Pancreas (tissue), 10 donors: ENCODE measurements at regions of chr6 and their contacts with region 1.

Region 1: DNA sequence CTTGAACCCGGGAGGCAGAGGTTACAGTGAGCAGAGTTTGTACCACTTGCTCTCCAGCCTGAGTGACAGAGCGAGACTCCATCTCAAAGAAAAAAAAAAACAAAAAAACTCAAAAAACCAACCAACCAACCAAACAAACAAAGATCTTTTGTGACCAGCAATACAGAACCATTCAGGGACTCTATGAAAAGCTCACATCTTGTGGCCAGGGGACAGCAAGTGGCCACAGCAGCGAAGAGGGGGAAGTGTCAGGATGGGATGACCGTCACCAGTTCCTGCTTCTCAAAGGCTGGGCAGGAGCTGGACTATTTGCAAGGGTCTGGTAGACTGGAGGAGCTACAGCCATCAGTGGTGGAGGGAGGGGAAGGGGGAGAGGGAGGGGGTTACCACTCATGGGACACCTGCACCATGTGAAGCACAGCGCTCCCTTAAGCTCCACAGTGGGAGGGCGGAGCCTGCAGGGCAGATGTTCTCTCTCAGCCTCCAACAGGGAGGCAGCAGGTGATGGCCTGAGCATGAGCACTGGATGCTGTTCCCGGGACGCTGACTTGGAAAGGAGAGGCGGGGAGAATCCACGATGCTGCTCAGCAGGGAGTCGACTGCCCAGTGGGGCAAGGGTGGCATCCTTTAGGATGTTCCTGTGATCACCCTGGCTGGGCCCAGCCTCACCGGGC is 19.7 kb upstream of the ULBP3 start:
- DNase-seq: no peak
- ATAC-seq: no peak
- H3K4me3 ChIP-seq: no peak overlapping the region
- H3K27ac ChIP-seq: no peak overlapping the region
- H3K4me1 ChIP-seq: no peaks in the 10 kb centered on the region
- H3K27me3 ChIP-seq: no peaks in the 10 kb centered on the region
- CTCF ChIP-seq: no peak

Region 2: GRCh38 chr6:150334790-150335783 is 246.5 kb after region 1 on chr6:
- intact Hi-C with region 1: loop called in 2 of 3 experiments (anchors 5 kb)
- DNase-seq: peak in 3 of 6 donors; percentile 21 to 59 (median 24)
- ATAC-seq: peak; percentile 50 to 82 (median 74)
- H3K4me3 ChIP-seq: no peak overlapping the region
- H3K27ac ChIP-seq: no peak overlapping the region
- H3K4me1 ChIP-seq: no peaks in the 10 kb centered on the region
- H3K27me3 ChIP-seq: no peaks in the 10 kb centered on the region
- CTCF ChIP-seq: peak; percentile 58 to 74 (median 64)